ENCODE measurements at regions of chr11 and their contacts with region 1.

Region 1: DNA sequence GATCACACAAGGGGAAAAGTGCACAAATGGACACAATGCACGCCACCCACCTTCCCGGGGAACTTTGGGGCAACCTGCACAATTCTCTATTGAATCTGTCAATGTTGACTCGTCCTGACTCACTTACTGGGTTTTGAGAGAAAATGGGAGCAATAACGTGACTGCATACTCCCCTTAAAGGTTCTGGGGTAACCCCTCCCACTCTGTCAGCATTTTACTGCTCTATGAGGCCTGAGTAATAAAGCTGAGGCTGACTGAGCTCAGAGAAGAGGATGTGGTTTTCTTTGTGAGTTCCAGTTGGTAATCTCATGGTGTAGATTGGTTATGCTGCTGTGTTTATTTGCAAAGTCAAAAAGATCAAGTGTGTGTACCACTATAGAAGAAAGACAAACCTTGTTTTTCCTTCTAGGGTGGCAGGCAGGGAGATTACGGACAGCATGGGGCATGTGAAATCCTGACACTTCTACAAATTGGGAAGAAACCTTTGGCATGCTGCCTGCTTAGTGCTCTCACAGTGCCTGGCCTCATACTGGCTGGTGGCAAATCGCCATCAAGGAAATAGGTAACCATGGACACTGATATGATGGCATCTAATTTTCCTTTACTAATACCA is 16.1 kb upstream of the APOA1 start:
- DNase-seq: peak; percentile 69
- H3K4me3 Mint-ChIP-seq: peak overlapping the region; percentile 53
- H3K27ac Mint-ChIP-seq: peak overlapping the region; percentile 90
- H3K4me1 Mint-ChIP-seq: peaks cover 52% of the 10 kb centered on the region
- H3K27me3 Mint-ChIP-seq: no peaks in the 10 kb centered on the region

Region 2: DNA sequence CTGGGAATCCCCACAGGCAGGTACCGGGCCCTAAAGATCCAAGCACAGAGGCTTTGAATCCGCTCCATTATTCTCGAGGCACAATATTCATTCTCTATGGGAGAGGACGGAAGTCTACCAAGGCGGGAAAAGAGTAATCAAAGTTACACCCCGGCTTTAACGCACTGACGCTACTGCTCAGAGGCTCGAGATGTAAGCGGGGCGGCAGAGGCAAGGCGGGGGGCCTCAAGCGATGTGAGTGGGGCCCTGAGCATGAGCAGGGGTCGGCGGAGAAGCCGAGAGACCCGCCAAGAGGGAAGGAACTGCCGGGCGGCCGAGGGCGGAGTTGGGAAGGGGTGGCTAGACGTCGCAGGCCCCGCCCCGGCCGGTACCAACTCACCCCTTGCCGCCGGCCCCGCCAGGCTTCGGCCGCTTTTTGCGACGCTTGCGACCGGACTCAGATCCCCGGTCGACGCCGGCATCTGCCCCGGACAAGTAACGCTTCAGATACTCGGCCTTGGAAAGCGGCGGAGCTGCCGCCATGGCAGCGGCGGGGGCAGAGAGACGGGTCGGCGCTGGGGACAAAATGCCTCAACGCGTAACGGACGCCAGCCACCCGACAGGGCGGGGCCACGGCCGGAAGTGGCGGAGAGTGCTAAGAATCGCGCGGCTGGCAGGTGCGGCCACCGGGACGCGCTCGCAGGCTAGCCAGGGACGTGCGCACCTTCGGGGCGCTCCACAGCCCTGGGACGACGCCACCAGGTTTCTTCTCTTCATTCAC is 80.9 kb before region 1 on chr11 and contains the start of gene BUD13:
- intact Hi-C with region 1: loop called (anchors 1 kb)
- DNase-seq: peak; percentile 93
- H3K4me3 Mint-ChIP-seq: peak within 1 kb of the TSS; percentile 99
- H3K27ac Mint-ChIP-seq: peak within 1 kb of the TSS; percentile 97
- H3K4me1 Mint-ChIP-seq: peaks cover 39% of the 10 kb centered on the region
- H3K27me3 Mint-ChIP-seq: no peaks in the 10 kb centered on the region
- total RNA-seq, gene BUD13: 30.4 and 34.3 TPM in 2 replicates

Region 3: GRCh38 chr11:116835791-116836631 is 17.6 kb before region 1 on chr11:
- intact Hi-C with region 1: loop called (anchors 2 kb)
- DNase-seq: peak; percentile 76
- H3K4me3 Mint-ChIP-seq: peak overlapping the region; percentile 49
- H3K27ac Mint-ChIP-seq: no peak overlapping the region
- H3K4me1 Mint-ChIP-seq: peaks cover 6% of the 10 kb centered on the region
- H3K27me3 Mint-ChIP-seq: no peaks in the 10 kb centered on the region

Region 4: DNA sequence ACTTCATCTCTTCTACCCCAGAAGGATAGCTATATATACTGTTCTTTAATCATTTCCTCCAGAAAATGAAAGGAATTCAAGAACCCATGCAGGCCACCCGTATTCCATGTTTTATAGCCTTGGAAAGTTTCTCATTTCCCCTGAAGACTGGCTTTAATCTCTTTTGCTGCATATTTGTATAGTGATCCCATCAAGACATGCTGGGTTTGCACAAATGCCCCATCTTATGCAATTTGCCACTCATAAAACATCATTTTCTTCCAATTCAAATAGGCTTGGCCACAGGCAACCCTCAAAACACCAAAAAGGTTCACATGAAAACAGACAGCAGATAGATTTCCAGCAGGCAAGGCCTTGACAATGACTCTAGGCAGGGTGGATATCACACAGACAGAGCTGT is 12.1 kb after region 1 on chr11:
- intact Hi-C with region 1: no loop called
- DNase-seq: no peak
- H3K4me3 Mint-ChIP-seq: no peak overlapping the region
- H3K27ac Mint-ChIP-seq: no peak overlapping the region
- H3K4me1 Mint-ChIP-seq: peaks cover 9% of the 10 kb centered on the region
- H3K27me3 Mint-ChIP-seq: no peaks in the 10 kb centered on the region

Region 5: DNA sequence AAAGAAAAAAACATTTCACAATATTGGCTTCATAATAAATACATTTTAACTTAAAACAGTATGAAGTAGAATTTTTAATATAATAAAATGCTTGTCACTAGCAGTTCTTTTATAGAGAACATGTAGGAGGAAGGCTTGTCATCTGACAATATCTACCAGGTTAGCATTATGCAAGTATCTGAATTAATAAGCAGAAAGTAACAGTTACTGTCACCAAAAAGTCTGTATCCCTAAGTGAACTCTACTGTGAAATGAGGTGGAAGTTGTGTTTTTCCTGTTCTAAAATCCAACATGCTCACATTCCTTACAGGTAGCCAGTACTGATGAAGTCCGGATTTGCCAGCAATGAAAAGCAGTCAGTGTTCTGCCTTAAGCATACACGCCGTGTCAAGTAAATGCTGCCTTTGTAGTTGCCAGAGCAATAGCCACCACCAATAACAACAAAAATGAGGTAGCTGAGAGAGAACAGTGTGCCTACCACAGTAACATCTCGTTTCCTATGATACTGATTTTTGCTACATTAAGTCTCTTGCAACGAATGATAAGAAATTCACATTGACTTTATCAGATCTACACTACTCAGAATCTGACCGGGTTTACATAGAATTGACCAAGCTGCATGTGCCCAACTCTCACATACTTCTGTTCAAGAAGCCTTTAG is 149.2 kb after region 1 on chr11:
- intact Hi-C with region 1: loop called (anchors 2 kb)
- DNase-seq: peak; percentile 47
- H3K4me3 Mint-ChIP-seq: no peak overlapping the region
- H3K27ac Mint-ChIP-seq: peak overlapping the region; percentile 91
- H3K4me1 Mint-ChIP-seq: peaks cover 59% of the 10 kb centered on the region
- H3K27me3 Mint-ChIP-seq: no peaks in the 10 kb centered on the region

Region 6: DNA sequence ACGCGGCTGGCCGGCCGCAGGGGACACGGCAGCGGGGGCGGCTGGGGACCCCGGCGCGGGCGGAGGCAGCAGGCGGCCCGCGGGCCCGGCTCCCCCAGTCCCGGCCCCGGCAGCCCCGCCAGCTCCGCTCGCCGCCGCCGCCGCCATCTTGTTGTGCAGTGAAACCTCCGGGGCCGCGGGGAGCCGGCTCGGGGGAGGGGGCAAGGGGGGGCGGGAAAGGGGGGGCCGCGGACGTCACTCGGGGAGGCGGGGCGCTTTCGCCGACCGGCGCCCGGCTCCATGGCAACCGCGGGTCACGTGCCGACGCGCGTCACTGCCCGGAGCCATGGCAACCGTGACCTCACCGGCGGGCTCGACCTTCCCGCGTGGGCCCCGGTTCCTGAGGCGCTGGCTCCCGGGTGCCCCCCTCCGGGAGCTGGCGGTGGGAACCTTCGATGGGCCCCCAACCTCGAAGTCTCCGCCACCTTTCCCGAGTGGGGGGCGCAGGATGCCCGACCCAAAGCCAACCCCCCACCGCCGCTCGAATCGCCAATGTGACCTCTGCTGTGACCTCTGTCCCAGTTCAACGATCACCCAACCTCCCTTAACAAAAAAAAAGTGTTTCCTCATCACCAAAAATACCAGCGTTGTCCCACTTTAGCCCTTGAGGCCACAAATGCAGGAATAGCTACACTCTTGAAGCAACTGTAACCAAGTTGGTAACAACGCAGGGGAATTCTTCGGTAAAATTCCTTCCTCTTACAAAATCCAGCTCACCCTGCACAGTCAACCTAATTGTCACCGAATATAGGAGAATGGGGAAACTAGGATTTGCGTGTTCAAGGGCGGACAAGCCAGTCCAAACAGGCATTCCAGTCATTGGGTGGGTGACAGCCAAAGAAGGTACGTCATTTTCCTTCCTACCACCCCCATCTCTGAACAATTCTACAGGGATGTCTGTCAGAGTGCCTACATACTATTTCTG is 245.0 kb after region 1 on chr11 and contains the start of gene SIK3:
- intact Hi-C with region 1: loop called (anchors 2 kb)
- DNase-seq: peak; percentile 87
- H3K4me3 Mint-ChIP-seq: peak within 1 kb of the TSS; percentile 98
- H3K27ac Mint-ChIP-seq: peak within 1 kb of the TSS; percentile 90
- H3K4me1 Mint-ChIP-seq: peaks cover 48% of the 10 kb centered on the region
- H3K27me3 Mint-ChIP-seq: peaks cover 6% of the 10 kb centered on the region
- total RNA-seq, gene SIK3: 25.3 and 25.6 TPM in 2 replicates